MCF 10A (cell line): ENCODE measurements at regions of chr1 and their contacts with region 1.

Region 1: GRCh38 chr1:109532365-109533136 is 7.1 kb upstream of the GPR61 start:
- DNase-seq: peak; percentile 78
- H3K4me3 Mint-ChIP-seq: no peak overlapping the region
- H3K27ac Mint-ChIP-seq: no peak overlapping the region
- H3K4me1 Mint-ChIP-seq: no peaks in the 10 kb centered on the region
- H3K27me3 Mint-ChIP-seq: no peaks in the 10 kb centered on the region
- CTCF ChIP-seq: peak; percentile 81

Region 2: GRCh38 chr1:109193653-109194590 is 338.6 kb before region 1 on chr1:
- CTCF ChIA-PET with region 1: interaction called, 4 read pairs
- POLR2A ChIA-PET with region 1: no interaction called
- intact Hi-C with region 1: loop called (anchors 10 kb)
- DNase-seq: peak; percentile 58
- H3K4me3 Mint-ChIP-seq: no peak overlapping the region
- H3K27ac Mint-ChIP-seq: no peak overlapping the region
- H3K4me1 Mint-ChIP-seq: peaks cover 24% of the 10 kb centered on the region
- H3K27me3 Mint-ChIP-seq: no peaks in the 10 kb centered on the region
- CTCF ChIP-seq: peak; percentile 59

Region 3: DNA sequence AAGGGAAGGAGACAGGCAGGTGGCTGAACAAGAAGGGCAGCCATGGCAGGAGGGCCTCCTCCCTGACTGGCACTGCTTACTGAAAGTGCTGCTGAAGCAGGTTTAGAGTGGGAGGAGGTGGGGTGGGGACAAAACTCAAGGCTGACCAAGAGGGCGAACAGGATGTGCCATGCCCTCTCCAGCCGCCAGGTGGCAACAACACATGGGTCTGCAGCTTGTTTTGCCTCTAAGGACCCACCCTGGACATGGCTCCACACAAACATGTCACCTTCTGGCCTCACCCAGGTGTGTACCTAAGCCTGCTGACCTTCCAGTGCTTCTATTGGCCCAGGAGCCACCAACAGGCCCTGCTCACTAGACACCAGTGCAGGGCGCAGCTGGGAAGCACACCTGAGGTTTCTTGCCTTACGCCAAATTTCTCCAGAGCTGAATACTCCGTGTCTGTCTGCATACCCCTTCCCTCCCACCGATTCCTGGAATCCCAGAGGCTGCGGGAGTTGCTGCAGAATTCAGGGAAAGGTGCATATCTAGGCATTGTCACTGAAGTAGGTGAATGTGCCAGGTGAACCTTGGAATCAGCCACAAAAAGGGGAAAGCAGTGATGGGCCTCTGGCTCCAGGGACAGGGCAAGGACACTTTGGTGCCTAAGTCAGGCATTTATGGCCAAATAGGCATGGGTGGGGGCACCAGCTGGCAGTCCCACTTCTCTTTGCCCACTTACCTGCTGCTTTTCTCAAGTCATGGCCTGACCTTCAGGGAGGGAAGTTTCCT is 254.9 kb before region 1 on chr1:
- CTCF ChIA-PET with region 1: interaction called, 7 read pairs
- POLR2A ChIA-PET with region 1: no interaction called
- intact Hi-C with region 1: loop called (anchors 5 kb)
- DNase-seq: peak; percentile 70
- H3K4me3 Mint-ChIP-seq: no peak overlapping the region
- H3K27ac Mint-ChIP-seq: peak overlapping the region; percentile 16
- H3K4me1 Mint-ChIP-seq: peaks cover 48% of the 10 kb centered on the region
- H3K27me3 Mint-ChIP-seq: no peaks in the 10 kb centered on the region
- CTCF ChIP-seq: peak; percentile 92

Region 4: GRCh38 chr1:109493805-109494539 is 38.6 kb before region 1 on chr1 and contains the start of gene CYB561D1:
- CTCF ChIA-PET with region 1: interaction called, 1,071 read pairs
- POLR2A ChIA-PET with region 1: interaction called, 38 read pairs
- intact Hi-C with region 1: loop called (anchors 1 kb)
- DNase-seq: peak; percentile 80
- H3K4me3 Mint-ChIP-seq: peak within 1 kb of the TSS; percentile 98
- H3K27ac Mint-ChIP-seq: peak within 1 kb of the TSS; percentile 75
- H3K4me1 Mint-ChIP-seq: no peaks in the 10 kb centered on the region
- H3K27me3 Mint-ChIP-seq: no peaks in the 10 kb centered on the region
- CTCF ChIP-seq: peak; percentile 92
- total RNA-seq, gene CYB561D1: 6.9 and 7.8 TPM in 2 replicates

Region 5: GRCh38 chr1:109610609-109611307 is 78.2 kb after region 1 on chr1:
- CTCF ChIA-PET with region 1: interaction called, 16 read pairs
- POLR2A ChIA-PET with region 1: no interaction called
- intact Hi-C with region 1: no loop called
- DNase-seq: no peak
- H3K4me3 Mint-ChIP-seq: no peak overlapping the region
- H3K27ac Mint-ChIP-seq: no peak overlapping the region
- H3K4me1 Mint-ChIP-seq: no peaks in the 10 kb centered on the region
- H3K27me3 Mint-ChIP-seq: no peaks in the 10 kb centered on the region
- CTCF ChIP-seq: no peak

Region 6: GRCh38 chr1:109704173-109704572 is 171.6 kb after region 1 on chr1:
- CTCF ChIA-PET with region 1: no interaction called
- POLR2A ChIA-PET with region 1: no interaction called
- intact Hi-C with region 1: no loop called
- DNase-seq: no peak
- H3K4me3 Mint-ChIP-seq: no peak overlapping the region
- H3K27ac Mint-ChIP-seq: no peak overlapping the region
- H3K4me1 Mint-ChIP-seq: no peaks in the 10 kb centered on the region
- H3K27me3 Mint-ChIP-seq: no peaks in the 10 kb centered on the region
- CTCF ChIP-seq: no peak